Uterus (tissue), 4 donors: ENCODE measurements at regions of chr6 and their contacts with region 1.

Region 1: DNA sequence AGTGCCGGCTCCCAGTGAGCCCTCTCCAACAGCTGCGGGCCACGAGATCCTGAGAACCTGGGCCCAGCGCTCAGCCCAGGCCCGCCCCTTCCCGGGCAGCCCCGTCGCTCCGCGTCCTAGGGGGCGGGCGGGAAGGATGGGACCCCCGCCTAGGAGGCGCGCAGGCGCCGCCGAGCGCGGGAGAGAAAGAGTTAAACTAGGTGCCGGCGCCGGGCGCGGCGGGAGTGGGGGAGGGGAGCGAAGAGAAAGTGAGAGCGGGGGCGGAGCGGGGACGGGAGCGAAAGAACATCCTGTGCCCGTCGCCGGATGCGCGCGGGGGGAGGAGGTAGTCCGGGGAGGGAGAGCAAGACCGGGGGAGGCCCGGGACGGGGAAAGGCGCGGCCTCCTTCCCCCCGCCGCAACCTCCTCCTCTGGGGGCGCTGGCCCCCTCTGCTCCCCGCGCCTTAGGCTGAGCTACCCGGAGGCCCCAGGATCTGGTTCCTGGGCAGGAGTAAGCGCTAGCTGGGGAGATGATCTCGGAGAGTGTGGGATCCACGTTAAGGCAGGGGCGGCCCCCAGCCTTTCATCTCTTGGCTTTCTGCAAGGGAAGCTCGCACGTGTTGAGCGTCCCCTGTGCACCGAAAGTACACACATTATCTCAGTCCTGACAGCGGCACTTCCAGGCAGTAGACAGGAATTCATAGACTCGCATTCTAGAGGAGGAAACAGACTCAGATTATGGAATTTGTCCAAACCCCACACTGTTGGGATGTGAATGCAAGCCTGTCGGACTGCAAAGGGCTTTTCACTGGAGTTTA is 4.9 kb upstream of the ARMC12 start:
- DNase-seq: peak; percentile 98 to 99
- H3K4me3 ChIP-seq: peak overlapping the region; percentile 55 to 66
- H3K27ac ChIP-seq: peak overlapping the region; percentile 98 to 100
- H3K4me1 ChIP-seq: peaks cover 25 to 27% of the 10 kb centered on the region in 2 donors
- H3K27me3 ChIP-seq: no peaks in the 10 kb centered on the region
- CTCF ChIP-seq: peak in 3 of 4 experiments; percentile 15 to 27 (median 19)
- POLR2A ChIP-seq: peak; percentile 44 to 48

Region 2: DNA sequence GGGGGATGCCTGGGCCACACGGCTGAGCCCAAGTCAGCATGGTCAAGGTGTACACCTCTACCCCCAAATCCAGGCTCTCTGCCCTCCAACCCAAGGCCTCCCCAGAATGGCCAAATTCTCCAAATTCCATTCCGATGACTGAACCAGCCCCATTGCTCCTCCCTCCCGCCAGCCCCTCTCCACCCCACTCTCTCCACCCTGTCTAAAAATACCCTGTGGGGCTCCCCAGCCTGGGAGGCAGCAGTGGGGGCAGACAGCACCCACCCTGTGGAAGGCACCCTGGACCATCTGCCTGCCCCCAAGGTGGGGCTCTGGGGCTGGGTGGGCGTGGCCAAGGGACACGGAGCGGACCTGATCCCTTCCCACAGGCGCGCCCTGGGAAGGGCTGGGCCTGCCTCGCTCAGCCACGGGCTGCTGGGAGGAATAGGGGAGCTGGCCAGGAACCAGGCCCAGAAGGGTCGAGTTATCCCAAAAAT is 246.5 kb before region 1 on chr6:
- intact Hi-C with region 1: no loop called
- DNase-seq: peak; percentile 69 to 74
- H3K4me3 ChIP-seq: peak overlapping the region; percentile 10 to 27
- H3K27ac ChIP-seq: peak overlapping the region; percentile 98 to 100
- H3K4me1 ChIP-seq: peaks cover 11 to 41% of the 10 kb centered on the region in 2 donors
- H3K27me3 ChIP-seq: no peaks in the 10 kb centered on the region
- CTCF ChIP-seq: no peak
- POLR2A ChIP-seq: peak in 1 of 2 donors; percentile 8

Region 3: DNA sequence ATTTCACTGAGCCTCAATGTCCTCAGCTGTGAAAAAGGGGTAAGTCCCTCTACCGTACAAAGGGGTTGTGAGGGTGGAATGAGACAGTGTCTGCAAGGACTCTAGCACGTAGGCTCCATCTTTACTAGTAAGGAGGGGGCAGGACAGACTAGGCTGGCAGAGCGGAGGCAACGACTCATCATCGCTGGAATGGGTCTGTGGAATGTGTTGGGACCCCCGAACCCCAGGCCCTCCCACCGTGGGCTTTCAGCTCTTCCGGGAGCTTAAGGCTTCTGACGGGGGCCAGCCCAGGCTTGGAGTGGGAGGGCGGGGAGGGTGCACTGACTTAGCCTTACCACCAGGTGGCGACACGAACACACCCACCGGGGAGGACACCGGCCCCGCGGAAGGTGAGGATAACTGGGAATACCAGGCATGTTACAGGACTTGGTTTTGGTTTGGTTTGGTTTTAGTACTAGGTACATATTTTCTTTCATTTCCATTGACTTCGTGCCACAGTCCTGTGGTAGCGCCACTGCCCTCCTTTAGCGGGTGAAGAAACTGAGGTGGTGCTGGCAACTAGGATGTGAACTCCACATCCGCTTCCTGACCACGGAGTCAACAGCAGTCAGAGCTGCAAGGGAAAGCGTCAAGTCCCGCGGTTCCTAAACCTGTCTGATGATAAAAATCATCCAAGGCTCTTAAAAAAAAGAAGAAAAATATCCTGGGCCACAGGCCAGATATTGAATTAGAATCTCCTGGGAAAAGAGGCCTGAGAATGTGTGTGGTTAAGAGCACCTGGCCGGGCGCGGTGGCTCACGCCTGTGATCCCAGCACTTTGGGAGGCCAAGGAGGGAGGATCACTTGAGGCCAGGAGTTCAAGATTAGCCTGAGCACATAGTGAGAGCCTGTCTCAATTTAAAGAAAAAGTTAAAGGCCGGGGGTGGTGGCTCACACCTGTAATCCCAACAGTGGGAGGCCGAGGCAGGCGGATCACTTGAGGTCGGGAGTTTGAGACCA is 209.0 kb before region 1 on chr6:
- intact Hi-C with region 1: loop called (anchors 5 kb)
- DNase-seq: peak; percentile 76 to 78
- H3K4me3 ChIP-seq: peak overlapping the region; percentile 11 to 14
- H3K27ac ChIP-seq: no peak overlapping the region
- H3K4me1 ChIP-seq: no peaks in the 10 kb centered on the region
- H3K27me3 ChIP-seq: no peaks in the 10 kb centered on the region
- CTCF ChIP-seq: peak; percentile 88 to 100 (median 95)
- POLR2A ChIP-seq: no peak

Region 4: DNA sequence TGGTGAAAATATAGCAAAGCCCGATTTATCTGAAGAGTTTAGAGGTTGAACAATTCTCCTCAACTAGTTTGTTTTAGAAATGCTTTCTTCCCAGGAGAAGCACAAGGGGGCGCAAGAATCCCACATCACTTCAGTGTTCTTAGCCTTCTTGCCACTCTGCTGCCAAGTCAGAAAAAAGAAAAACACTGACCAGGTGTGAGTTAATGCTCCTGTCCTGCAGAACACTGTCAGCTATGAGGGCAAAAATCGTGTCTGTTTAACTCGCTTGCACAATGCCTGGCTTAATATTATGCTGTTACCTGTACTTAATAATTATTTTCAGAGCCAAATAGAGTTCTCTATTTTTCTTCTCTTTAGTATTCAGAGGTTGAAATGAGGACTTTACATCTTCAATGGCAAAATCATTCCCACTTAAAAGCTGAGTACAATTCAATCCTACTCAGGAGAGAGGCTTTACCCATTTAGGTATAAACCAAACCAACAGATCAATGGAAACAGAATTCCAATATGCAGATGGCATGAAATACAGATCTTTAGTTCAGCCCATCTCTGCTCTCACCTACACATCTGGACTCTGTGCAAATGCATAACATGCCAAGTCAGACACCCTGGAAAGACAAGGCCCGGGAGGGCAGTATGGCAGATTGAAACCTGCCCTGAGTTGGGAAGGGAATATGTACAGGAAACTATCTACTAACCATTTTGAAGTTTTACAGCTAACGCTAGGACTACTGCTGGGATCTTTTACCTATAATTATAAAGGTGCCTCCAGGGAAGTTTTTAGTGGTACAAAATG is 147.8 kb before region 1 on chr6:
- intact Hi-C with region 1: loop called (anchors 5 kb)
- DNase-seq: peak; percentile 68 to 87
- H3K4me3 ChIP-seq: no peak overlapping the region
- H3K27ac ChIP-seq: peak overlapping the region; percentile 92 to 98
- H3K4me1 ChIP-seq: no peaks in the 10 kb centered on the region
- H3K27me3 ChIP-seq: no peaks in the 10 kb centered on the region
- CTCF ChIP-seq: peak; percentile 78 to 95 (median 90)
- POLR2A ChIP-seq: no peak

Region 5: GRCh38 chr6:35601331-35602132 is 130.4 kb before region 1 on chr6:
- intact Hi-C with region 1: loop called (anchors 5 kb)
- DNase-seq: peak; percentile 64 to 90
- H3K4me3 ChIP-seq: peak overlapping the region; percentile 5 to 16
- H3K27ac ChIP-seq: peak overlapping the region; percentile 91 to 97
- H3K4me1 ChIP-seq: peaks cover 17 to 49% of the 10 kb centered on the region in 2 donors
- H3K27me3 ChIP-seq: no peaks in the 10 kb centered on the region
- CTCF ChIP-seq: no peak
- POLR2A ChIP-seq: peak; percentile 6 to 27

Region 6: GRCh38 chr6:35688581-35689322 is 43.2 kb before region 1 on chr6 and contains the start of gene FKBP5:
- intact Hi-C with region 1: loop called (anchors 5 kb)
- DNase-seq: peak; percentile 95 to 97
- H3K4me3 ChIP-seq: peak within 1 kb of the TSS; percentile 70 to 83
- H3K27ac ChIP-seq: peak within 1 kb of the TSS; percentile 95 to 99
- H3K4me1 ChIP-seq: no peaks in the 10 kb centered on the region
- H3K27me3 ChIP-seq: no peaks in the 10 kb centered on the region
- CTCF ChIP-seq: peak in 2 of 4 experiments; percentile 3 to 13
- POLR2A ChIP-seq: peak; percentile 99
- total RNA-seq, gene FKBP5: 35.1 to 197 (median 84.5) TPM

Region 7: GRCh38 chr6:35786810-35787209 is 54.9 kb after region 1 on chr6:
- intact Hi-C with region 1: no loop called
- DNase-seq: no peak
- H3K4me3 ChIP-seq: no peak overlapping the region
- H3K27ac ChIP-seq: no peak overlapping the region
- H3K4me1 ChIP-seq: no peaks in the 10 kb centered on the region
- H3K27me3 ChIP-seq: peaks cover 3 to 4% of the 10 kb centered on the region in 2 donors
- CTCF ChIP-seq: no peak
- POLR2A ChIP-seq: no peak

Region 8: GRCh38 chr6:35831257-35832007 is 99.5 kb after region 1 on chr6:
- intact Hi-C with region 1: no loop called
- DNase-seq: no peak
- H3K4me3 ChIP-seq: no peak overlapping the region
- H3K27ac ChIP-seq: no peak overlapping the region
- H3K4me1 ChIP-seq: no peaks in the 10 kb centered on the region
- H3K27me3 ChIP-seq: no peaks in the 10 kb centered on the region
- CTCF ChIP-seq: no peak
- POLR2A ChIP-seq: no peak

Region 9: GRCh38 chr6:36020154-36020553 is 288.2 kb after region 1 on chr6:
- intact Hi-C with region 1: no loop called
- DNase-seq: no peak
- H3K4me3 ChIP-seq: no peak overlapping the region
- H3K27ac ChIP-seq: no peak overlapping the region
- H3K4me1 ChIP-seq: peaks cover 0 to 4% of the 10 kb centered on the region in 2 donors
- H3K27me3 ChIP-seq: no peaks in the 10 kb centered on the region
- CTCF ChIP-seq: no peak
- POLR2A ChIP-seq: no peak